ENCODE measurements at regions of chr2 and their contacts with region 1.

Region 1: DNA sequence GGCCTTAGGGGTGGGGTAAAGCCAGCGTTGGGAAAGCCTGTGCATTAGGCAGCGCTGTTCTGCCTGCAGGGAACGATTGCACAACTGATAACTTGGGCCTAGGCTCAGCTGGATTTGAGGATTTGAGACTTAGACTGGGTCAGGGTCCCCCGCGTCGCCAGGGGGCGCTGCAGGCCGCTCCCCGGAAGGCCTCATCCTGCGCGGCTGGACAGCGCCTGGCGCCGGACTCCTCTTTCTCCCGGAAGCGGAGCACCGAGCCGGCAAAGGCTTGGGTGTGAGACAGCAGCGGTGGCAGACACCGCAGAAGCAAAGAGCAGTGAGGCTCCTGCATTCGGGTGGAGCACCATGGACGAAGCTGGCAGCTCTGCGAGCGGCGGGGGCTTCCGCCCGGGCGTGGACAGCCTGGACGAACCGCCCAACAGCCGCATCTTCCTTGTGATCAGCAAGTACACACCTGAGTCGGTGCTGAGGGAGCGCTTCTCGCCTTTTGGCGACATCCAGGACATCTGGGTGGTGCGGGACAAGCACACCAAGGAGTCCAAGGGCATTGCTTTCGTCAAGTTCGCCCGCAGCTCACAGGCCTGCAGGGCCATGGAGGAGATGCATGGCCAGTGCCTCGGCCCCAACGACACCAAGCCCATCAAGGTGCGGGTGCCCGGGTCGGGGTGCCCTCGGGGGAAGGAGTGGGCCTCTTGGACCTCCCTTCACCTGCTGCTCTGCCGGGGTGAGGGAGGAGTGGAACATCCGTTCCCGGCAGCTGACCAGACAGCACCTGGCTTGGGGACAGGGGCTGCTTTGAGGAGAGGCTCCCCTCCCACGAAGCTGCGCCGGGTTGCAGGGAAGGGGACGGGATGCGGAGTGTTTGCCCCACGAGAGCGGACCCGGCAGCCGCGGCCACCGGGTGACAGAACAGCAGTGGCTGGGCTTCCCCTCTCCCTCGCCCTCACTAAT is at the start of gene RBM45:
- DNase-seq: peak; percentile 97
- H3K4me3 Mint-ChIP-seq: peak within 1 kb of the TSS; percentile 93
- H3K27ac Mint-ChIP-seq: peak within 1 kb of the TSS; percentile 87
- H3K4me1 Mint-ChIP-seq: peaks cover 7% of the 10 kb centered on the region
- H3K27me3 Mint-ChIP-seq: no peaks in the 10 kb centered on the region
- CTCF ChIP-seq: peak; percentile 94
- total RNA-seq, gene RBM45: 12.7 and 14.5 TPM in 2 replicates

Region 2: GRCh38 chr2:177983183-177983788 is 129.2 kb before region 1 on chr2:
- CTCF ChIA-PET with region 1: interaction called, 6 read pairs
- POLR2A ChIA-PET with region 1: interaction called, 3 read pairs
- intact Hi-C with region 1: loop called (anchors 1 kb)
- DNase-seq: peak; percentile 76
- H3K4me3 Mint-ChIP-seq: no peak overlapping the region
- H3K27ac Mint-ChIP-seq: no peak overlapping the region
- H3K4me1 Mint-ChIP-seq: no peaks in the 10 kb centered on the region
- H3K27me3 Mint-ChIP-seq: peaks cover 26% of the 10 kb centered on the region
- CTCF ChIP-seq: peak; percentile 65

Region 3: GRCh38 chr2:178225006-178225805 is 112.7 kb after region 1 on chr2:
- CTCF ChIA-PET with region 1: no interaction called
- POLR2A ChIA-PET with region 1: no interaction called
- intact Hi-C with region 1: no loop called
- DNase-seq: no peak
- H3K4me3 Mint-ChIP-seq: no peak overlapping the region
- H3K27ac Mint-ChIP-seq: no peak overlapping the region
- H3K4me1 Mint-ChIP-seq: peaks cover 20% of the 10 kb centered on the region
- H3K27me3 Mint-ChIP-seq: no peaks in the 10 kb centered on the region
- CTCF ChIP-seq: no peak

Region 4: GRCh38 chr2:178397002-178397605 is 284.6 kb after region 1 on chr2:
- CTCF ChIA-PET with region 1: interaction called, 17 read pairs
- POLR2A ChIA-PET with region 1: no interaction called
- intact Hi-C with region 1: no loop called
- DNase-seq: peak; percentile 60
- H3K4me3 Mint-ChIP-seq: no peak overlapping the region
- H3K27ac Mint-ChIP-seq: no peak overlapping the region
- H3K4me1 Mint-ChIP-seq: peaks cover 5% of the 10 kb centered on the region
- H3K27me3 Mint-ChIP-seq: no peaks in the 10 kb centered on the region
- CTCF ChIP-seq: peak; percentile 51

Region 5: GRCh38 chr2:178522950-178523595 is 410.6 kb after region 1 on chr2:
- CTCF ChIA-PET with region 1: no interaction called
- POLR2A ChIA-PET with region 1: interaction called, 3 read pairs
- intact Hi-C with region 1: loop called (anchors 5 kb)
- DNase-seq: peak; percentile 92
- H3K4me3 Mint-ChIP-seq: peak overlapping the region; percentile 90
- H3K27ac Mint-ChIP-seq: peak overlapping the region; percentile 95
- H3K4me1 Mint-ChIP-seq: no peaks in the 10 kb centered on the region
- H3K27me3 Mint-ChIP-seq: no peaks in the 10 kb centered on the region
- CTCF ChIP-seq: peak; percentile 87